Ascending aorta (tissue), 2 donors: ENCODE measurements at regions of chr11 and their contacts with region 1.

Region 1: DNA sequence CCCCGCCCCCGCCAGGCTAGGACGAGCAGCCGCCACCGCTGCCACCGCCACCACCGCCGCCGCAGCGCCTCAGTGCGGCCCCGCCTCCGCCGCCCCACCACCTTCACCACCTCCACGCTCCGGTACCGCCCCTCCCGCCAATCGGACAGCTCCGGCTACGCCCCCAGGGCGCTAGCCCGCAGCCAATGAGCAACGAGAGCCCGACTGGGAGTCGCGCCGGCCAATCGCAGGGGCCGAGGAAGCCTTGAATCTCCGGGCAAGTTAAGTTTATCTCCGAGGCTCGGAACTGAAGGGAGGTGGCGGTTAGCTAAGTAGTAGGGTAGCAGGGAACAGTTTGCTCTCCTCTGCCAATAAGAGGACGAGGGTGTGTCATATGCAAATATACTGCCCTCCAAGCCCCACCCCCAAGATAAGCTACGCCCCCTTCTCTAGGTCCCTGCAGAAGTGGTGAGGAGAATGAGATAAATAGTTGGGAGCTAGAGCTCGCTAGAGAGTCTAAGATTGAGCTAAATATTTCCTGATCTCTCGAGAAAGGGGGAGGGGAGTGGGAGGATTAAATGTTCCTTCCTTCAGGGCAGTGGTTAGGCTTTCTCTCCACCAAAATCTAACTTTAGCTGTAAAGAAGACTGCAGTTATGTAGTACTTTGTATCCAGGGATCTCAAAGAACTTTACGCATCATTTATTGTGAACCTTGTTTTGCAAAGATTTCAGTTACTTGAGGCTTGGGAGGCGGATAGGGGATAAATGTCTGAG is at the start of gene SESN3:
- DNase-seq: peak; percentile 96 to 99
- H3K4me3 ChIP-seq: peak within 1 kb of the TSS; percentile 70 to 94
- H3K27ac ChIP-seq: peak within 1 kb of the TSS; percentile 85 to 87
- H3K4me1 ChIP-seq: peaks cover 0 to 14% of the 10 kb centered on the region in 2 donors
- H3K27me3 ChIP-seq: no peaks in the 10 kb centered on the region
- CTCF ChIP-seq: peak in 1 of 3 experiments; percentile 17
- total RNA-seq, gene SESN3: 15.1 TPM

Region 2: GRCh38 chr11:94973099-94973968 is 258.0 kb before region 1 on chr11 and contains the starts of genes CWC15 and KDM4D:
- intact Hi-C with region 1: loop called (anchors 2 kb)
- DNase-seq: peak; percentile 86 to 96
- H3K4me3 ChIP-seq: peak within 1 kb of the TSS; percentile 69 to 96
- H3K27ac ChIP-seq: peak within 1 kb of the TSS; percentile 76 to 82
- H3K4me1 ChIP-seq: peaks cover 0 to 8% of the 10 kb centered on the region in 2 donors
- H3K27me3 ChIP-seq: no peaks in the 10 kb centered on the region
- CTCF ChIP-seq: no peak
- total RNA-seq, gene CWC15: 16.2 TPM
- total RNA-seq, gene KDM4D: not detected

Region 3: GRCh38 chr11:95089620-95090542 is 141.4 kb before region 1 on chr11 and contains the start of gene ENDOD1:
- intact Hi-C with region 1: loop called (anchors 5 kb)
- DNase-seq: peak; percentile 18 to 90
- H3K4me3 ChIP-seq: peak within 1 kb of the TSS; percentile 82 to 97
- H3K27ac ChIP-seq: peak within 1 kb of the TSS; percentile 90 to 94
- H3K4me1 ChIP-seq: peaks cover 8 to 34% of the 10 kb centered on the region in 2 donors
- H3K27me3 ChIP-seq: no peaks in the 10 kb centered on the region
- CTCF ChIP-seq: peak in 1 of 3 experiments; percentile 17
- total RNA-seq, gene ENDOD1: 60.2 TPM

Region 4: DNA sequence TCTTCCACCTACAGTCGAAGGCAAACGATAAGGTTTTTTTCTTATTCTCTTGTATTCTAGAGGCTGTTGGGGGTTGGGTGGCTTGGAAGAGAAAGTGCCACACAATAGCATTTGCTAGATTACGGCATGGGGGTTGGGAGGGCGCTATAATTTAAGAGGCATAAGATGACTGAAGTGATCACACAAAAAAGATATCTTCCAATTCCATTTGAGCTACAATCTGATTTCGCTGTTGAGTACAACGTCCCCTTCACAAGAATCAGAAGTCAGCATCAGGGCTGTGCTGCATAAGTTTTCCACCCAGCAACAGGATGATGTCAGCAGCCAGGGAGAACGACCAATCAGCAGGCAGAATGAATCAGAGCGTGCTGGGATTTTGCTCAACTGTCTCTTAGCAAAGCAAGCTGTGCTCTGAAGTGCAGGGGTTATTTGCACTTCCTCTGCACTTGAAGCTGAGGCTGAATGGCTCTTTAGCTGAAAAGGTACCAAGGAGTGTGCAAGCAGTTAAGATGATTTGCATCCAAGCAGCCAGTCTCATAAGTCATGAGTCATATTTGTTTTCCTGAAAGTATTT is 22.9 kb after region 1 on chr11:
- intact Hi-C with region 1: loop called (anchors 1 kb)
- DNase-seq: peak; percentile 56 to 91
- H3K4me3 ChIP-seq: peak overlapping the region; percentile 46 to 49
- H3K27ac ChIP-seq: peak overlapping the region in 1 of 2 donors; percentile 32
- H3K4me1 ChIP-seq: peaks cover 0 to 3% of the 10 kb centered on the region in 2 donors
- H3K27me3 ChIP-seq: no peaks in the 10 kb centered on the region
- CTCF ChIP-seq: no peak

Region 5: GRCh38 chr11:95364324-95365295 is 133.3 kb after region 1 on chr11:
- intact Hi-C with region 1: loop called (anchors 5 kb)
- DNase-seq: no peak
- H3K4me3 ChIP-seq: no peak overlapping the region
- H3K27ac ChIP-seq: peak overlapping the region; percentile 27 to 29
- H3K4me1 ChIP-seq: peaks cover 0 to 33% of the 10 kb centered on the region in 2 donors
- H3K27me3 ChIP-seq: no peaks in the 10 kb centered on the region
- CTCF ChIP-seq: no peak

Region 6: DNA sequence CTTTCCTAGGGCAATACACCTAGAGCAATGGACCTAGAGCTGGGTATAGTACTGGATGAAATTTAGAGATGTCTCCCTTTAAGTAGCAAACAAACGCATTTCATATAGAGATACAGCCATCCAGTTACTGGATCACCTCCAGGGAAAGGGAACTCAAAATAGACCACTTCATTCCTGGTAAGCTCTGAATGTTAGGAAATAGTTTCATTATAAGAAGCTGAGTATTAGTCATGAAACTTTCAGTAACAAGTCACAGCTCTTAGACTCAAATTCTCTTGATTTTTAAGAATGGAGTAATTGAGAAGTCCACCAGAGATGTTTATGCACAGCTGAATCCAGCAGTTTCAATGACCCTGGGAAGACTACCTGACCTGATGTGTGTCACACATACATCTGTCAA is 336.4 kb after region 1 on chr11:
- intact Hi-C with region 1: loop called (anchors 5 kb)
- DNase-seq: no peak
- H3K4me3 ChIP-seq: no peak overlapping the region
- H3K27ac ChIP-seq: peak overlapping the region; percentile 65 to 74
- H3K4me1 ChIP-seq: peaks cover 7 to 43% of the 10 kb centered on the region in 2 donors
- H3K27me3 ChIP-seq: no peaks in the 10 kb centered on the region
- CTCF ChIP-seq: no peak

Region 7: GRCh38 chr11:95764267-95764898 is 533.1 kb after region 1 on chr11:
- intact Hi-C with region 1: loop called (anchors 5 kb)
- DNase-seq: no peak
- H3K4me3 ChIP-seq: no peak overlapping the region
- H3K27ac ChIP-seq: no peak overlapping the region
- H3K4me1 ChIP-seq: no peaks in the 10 kb centered on the region
- H3K27me3 ChIP-seq: no peaks in the 10 kb centered on the region
- CTCF ChIP-seq: peak; percentile 47 to 69 (median 59)

Region 8: DNA sequence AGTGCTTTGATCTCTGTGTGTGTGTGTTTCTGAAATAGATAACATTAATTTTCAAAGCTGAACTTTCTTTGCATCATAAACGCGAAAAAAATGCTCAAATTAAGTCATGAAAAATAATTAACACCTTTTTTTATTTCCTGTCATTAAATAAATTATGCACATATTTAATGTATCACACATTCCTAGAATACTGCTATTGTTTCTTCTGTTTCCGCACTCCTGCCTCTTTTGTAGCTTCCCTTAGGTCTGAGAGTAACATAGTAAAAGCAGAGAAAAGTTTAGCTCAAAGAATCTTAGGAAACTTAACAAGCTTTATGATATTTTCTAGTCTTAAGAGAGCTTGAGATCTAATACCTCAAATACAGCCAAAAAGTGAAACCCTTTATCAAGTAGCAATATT is 1662.7 kb after region 1 on chr11:
- intact Hi-C with region 1: no loop called
- DNase-seq: no peak
- H3K4me3 ChIP-seq: no peak overlapping the region
- H3K27ac ChIP-seq: no peak overlapping the region
- H3K4me1 ChIP-seq: no peaks in the 10 kb centered on the region
- H3K27me3 ChIP-seq: no peaks in the 10 kb centered on the region
- CTCF ChIP-seq: no peak